Endothelial cell of umbilical vein (primary cell): ENCODE measurements at regions of chr5 and their contacts with region 1.

Region 1: GRCh38 chr5:101346906-101347305 is 443.8 kb upstream of the ST8SIA4 start:
- DNase-seq: no peak
- H3K4me3 ChIP-seq: no peak overlapping the region
- H3K27ac ChIP-seq: no peak overlapping the region
- H3K4me1 ChIP-seq: no peaks in the 10 kb centered on the region
- H3K27me3 ChIP-seq: no peaks in the 10 kb centered on the region
- CTCF ChIP-seq: no peak
- POLR2A ChIP-seq: no peak

Region 2: DNA sequence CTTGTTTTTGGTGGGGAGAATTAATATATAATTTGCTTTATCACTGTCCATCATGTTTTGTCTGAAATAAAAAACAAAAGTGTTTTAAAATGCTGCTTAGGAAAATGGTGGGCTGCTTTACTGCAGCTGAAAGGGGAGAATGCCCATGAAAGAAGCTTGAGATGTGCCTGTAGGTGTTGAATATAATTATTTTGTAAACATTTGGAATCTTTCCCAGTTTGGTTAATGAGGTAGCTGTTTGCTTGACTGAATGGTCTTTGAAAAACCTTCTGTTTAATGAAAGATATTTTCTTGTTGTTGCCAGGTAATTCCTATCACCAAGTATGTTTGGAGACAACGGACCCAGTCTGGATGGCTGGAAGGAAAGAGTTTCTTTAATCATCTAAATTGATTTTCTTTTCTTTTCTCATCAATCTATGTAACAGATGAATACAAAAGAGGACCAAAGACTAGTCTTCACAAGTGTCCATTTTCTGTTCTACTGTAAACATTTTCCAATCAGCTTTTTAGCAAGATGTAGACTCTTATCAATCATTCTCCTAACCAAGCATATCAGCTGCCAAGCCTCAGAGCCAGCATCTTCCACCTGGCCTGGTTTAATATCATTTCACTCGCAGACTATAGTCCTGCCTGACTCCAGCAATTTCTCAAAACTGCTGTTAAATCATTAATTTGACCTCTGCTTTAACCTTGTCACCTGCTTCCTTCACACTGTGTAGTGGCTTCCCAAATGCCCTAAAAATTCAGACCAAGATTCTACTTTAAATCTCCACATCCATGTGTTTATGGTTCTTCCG is 1976.9 kb before region 1 on chr5:
- CTCF ChIA-PET with region 1: no interaction called
- POLR2A ChIA-PET with region 1: no interaction called
- dilution Hi-C with region 1: no loop called
- intact Hi-C with region 1: loop called (anchors 5 kb)
- DNase-seq: no peak
- H3K4me3 ChIP-seq: no peak overlapping the region
- H3K27ac ChIP-seq: no peak overlapping the region
- H3K4me1 ChIP-seq: no peaks in the 10 kb centered on the region
- H3K27me3 ChIP-seq: no peaks in the 10 kb centered on the region
- CTCF ChIP-seq: no peak
- POLR2A ChIP-seq: no peak

Region 3: DNA sequence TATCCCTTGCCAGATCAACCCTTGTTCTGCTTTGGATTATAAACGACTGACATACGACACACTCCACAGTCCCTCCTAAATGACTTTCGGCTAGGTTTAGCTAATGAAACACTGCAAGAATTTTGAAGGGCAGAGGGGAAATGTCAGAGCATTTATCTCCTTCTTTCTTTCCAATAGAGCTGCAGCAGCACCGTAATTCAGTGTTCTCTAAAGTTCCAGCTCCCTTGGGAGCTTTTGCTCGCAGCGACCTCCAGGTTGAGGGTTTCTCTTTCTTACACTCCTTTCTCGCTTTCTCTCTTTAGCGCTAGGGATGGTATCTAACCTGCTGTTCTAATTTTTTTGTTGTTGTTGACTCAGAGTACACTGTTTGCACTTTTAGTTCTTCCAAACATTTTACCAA is 23.3 kb after region 1 on chr5:
- CTCF ChIA-PET with region 1: no interaction called
- POLR2A ChIA-PET with region 1: no interaction called
- dilution Hi-C with region 1: no loop called
- intact Hi-C with region 1: no loop called
- DNase-seq: no peak
- H3K4me3 ChIP-seq: no peak overlapping the region
- H3K27ac ChIP-seq: no peak overlapping the region
- H3K4me1 ChIP-seq: no peaks in the 10 kb centered on the region
- H3K27me3 ChIP-seq: no peaks in the 10 kb centered on the region
- CTCF ChIP-seq: no peak
- POLR2A ChIP-seq: no peak